Panc1 (cell line): ENCODE measurements at regions of chr17 and their contacts with region 1.

Region 1: GRCh38 chr17:82553210-82553930 is 33.8 kb downstream of the FOXK2 start:
- DNase-seq: no peak
- ATAC-seq: no peak
- H3K4me3 ChIP-seq: no peak overlapping the region
- H3K27ac ChIP-seq: no peak overlapping the region
- H3K4me1 ChIP-seq: peaks cover 41% of the 10 kb centered on the region
- H3K27me3 ChIP-seq: no peaks in the 10 kb centered on the region
- CTCF ChIP-seq: no peak

Region 2: GRCh38 chr17:82230627-82231311 is 322.6 kb before region 1 on chr17:
- CTCF ChIA-PET with region 1: no interaction called
- POLR2A ChIA-PET with region 1: no interaction called
- in situ Hi-C with region 1: no loop called
- intact Hi-C with region 1: no loop called
- DNase-seq: no peak
- ATAC-seq: peak; percentile 56
- H3K4me3 ChIP-seq: peak overlapping the region; percentile 72 to 97
- H3K27ac ChIP-seq: peak overlapping the region; percentile 98
- H3K4me1 ChIP-seq: peaks cover 47% of the 10 kb centered on the region
- H3K27me3 ChIP-seq: no peaks in the 10 kb centered on the region
- CTCF ChIP-seq: no peak; the same call in 1 of the 2 replicates

Region 3: DNA sequence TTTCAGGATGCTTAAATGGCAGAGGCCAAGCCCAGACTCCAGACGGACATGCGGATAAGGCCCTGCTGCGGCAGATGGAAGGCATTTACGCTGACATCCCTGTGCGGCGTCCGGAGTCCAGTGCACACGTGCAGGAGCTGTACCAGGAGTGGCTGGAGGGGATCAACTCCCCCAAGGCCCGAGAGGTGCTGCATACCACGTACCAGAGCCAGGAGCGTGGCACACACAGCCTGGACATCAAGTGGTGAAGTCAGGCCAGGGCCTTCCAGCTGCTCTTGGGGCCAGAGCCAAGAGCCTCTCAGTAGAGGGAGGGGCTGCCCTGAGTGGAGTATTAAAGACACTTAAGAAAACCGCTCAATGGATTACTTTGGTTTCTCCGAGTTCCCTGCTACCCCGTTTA is 65.5 kb before region 1 on chr17:
- CTCF ChIA-PET with region 1: no interaction called
- POLR2A ChIA-PET with region 1: no interaction called
- in situ Hi-C with region 1: no loop called
- intact Hi-C with region 1: no loop called
- DNase-seq: no peak
- ATAC-seq: no peak
- H3K4me3 ChIP-seq: no peak overlapping the region
- H3K27ac ChIP-seq: no peak overlapping the region
- H3K4me1 ChIP-seq: peaks cover 5% of the 10 kb centered on the region; the same call in 1 of the 2 replicates
- H3K27me3 ChIP-seq: no peaks in the 10 kb centered on the region
- CTCF ChIP-seq: no peak

Region 4: DNA sequence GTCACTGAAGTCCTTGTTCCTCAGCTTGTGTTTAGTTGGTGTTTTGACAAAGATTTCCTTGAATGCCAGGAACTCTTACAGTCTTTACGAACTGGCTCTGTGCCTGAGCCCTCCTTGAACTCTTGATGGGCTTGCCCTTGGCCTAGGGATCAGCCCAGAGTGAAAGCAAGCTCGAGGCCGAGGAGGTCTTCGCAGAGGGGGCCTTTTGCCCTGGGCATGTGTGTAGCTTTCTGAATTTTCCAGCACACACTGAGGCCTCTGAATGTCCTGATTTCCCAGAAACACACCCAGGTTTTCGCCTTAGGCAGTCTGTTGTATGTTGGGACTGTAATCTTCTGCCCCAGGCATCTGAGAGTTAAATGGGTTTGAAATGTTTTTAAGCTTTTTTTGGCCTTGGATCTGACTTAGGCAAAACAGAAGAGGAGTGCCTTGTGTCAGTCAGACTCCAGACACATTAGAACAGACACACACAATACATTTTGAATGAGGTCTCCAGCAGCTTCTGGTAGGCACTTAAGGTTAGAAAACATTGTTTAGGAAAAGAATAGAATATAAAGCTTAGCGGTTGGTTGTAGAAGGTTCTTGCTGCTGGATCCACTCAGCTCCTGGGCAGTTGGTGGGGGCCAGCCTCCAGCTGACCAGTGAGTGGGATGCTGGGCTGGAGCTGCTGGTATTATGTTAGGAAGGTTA is 16.7 kb before region 1 on chr17:
- CTCF ChIA-PET with region 1: interaction called, 12 read pairs
- POLR2A ChIA-PET with region 1: interaction called, 4 read pairs
- in situ Hi-C with region 1: no loop called
- intact Hi-C with region 1: no loop called
- DNase-seq: no peak
- ATAC-seq: peak; percentile 48
- H3K4me3 ChIP-seq: peak overlapping the region in 1 of 2 experiments; percentile 33; a peak in 2 of 4 replicates
- H3K27ac ChIP-seq: peak overlapping the region; percentile 80
- H3K4me1 ChIP-seq: peaks cover 41% of the 10 kb centered on the region
- H3K27me3 ChIP-seq: no peaks in the 10 kb centered on the region
- CTCF ChIP-seq: no peak